ENCODE measurements at regions of chr12 and their contacts with region 1.

Region 1: DNA sequence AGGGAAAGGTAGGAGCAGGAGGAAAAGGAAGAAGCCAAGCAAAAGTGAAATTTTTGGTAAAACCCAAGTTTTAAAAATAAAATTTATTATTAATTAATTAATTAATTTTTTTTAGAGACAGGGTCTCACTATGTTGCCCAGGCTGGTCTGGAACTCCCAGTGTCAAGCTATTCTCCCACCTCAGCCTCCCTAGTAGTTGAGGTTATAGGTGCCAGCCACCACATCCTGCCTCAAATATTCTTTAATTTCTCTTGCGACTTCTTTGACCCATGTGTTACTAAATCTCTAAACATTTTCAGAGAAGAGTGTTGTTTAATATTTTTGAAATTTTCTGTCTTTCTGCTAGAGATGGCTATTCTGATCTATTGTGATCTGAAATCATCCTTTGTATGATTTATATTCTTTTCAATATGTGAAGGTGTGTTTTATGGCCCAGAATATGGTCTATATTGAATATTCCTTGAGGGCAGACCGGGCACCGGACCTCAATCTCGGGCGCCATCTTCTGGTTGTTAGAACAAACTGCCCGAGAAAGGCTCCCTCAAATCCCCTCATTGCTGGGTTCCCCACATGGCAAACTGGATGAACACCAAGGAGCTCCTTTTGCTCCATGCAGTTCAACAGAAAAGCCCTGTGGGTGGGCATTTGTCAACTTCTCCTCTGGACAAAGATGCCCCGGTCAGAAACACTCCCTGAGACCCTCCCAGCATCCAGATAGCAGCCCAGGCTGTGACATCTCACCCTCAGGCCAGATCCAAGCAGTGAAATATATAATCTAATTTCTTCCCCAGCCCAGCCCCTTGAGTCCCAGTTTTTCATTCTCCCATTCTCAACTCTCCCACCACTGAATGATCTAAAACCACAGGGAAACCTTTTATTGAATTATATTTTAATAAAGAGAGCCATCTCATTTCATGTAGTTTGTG is 110.5 kb downstream of the ASCL4 start:
- DNase-seq: peak; percentile 58
- H3K4me3 Mint-ChIP-seq: no peak overlapping the region
- H3K27ac Mint-ChIP-seq: no peak overlapping the region
- H3K4me1 Mint-ChIP-seq: no peaks in the 10 kb centered on the region
- H3K27me3 Mint-ChIP-seq: peaks cover 10% of the 10 kb centered on the region

Region 2: GRCh38 chr12:107105410-107105703 is 779.7 kb before region 1 on chr12:
- CTCF ChIA-PET with region 1: no interaction called
- POLR2A ChIA-PET with region 1: no interaction called
- intact Hi-C with region 1: no loop called
- DNase-seq: no peak
- H3K4me3 Mint-ChIP-seq: no peak overlapping the region
- H3K27ac Mint-ChIP-seq: no peak overlapping the region
- H3K4me1 Mint-ChIP-seq: peaks cover 8% of the 10 kb centered on the region
- H3K27me3 Mint-ChIP-seq: peaks cover 1% of the 10 kb centered on the region

Region 3: GRCh38 chr12:107670999-107671643 is 213.9 kb before region 1 on chr12:
- CTCF ChIA-PET with region 1: interaction called, 52 read pairs
- POLR2A ChIA-PET with region 1: no interaction called
- intact Hi-C with region 1: loop called (anchors 1 kb)
- DNase-seq: peak; percentile 66
- H3K4me3 Mint-ChIP-seq: no peak overlapping the region
- H3K27ac Mint-ChIP-seq: no peak overlapping the region
- H3K4me1 Mint-ChIP-seq: no peaks in the 10 kb centered on the region
- H3K27me3 Mint-ChIP-seq: peaks cover 2% of the 10 kb centered on the region

Region 4: DNA sequence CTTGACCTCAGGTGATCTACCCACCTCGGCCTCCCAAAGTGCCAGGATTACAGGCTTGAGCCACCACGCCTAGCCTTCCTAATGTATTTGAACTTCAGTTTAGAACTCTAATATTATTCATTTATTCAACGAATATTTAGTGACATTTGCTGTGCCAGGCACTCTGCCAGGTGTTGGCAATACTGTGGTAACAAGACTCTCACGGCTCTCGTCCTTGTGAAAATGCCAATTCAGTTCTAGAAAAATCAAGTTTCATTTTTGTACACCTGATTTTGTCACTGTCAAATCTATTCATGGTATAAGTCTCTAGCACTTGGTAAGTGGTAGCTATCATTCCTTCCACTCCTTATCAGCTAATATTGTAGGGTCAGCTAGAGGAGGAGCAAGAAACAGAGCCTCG is 205.7 kb before region 1 on chr12:
- CTCF ChIA-PET with region 1: interaction called, 52 read pairs
- POLR2A ChIA-PET with region 1: no interaction called
- intact Hi-C with region 1: loop called (anchors 1 kb)
- DNase-seq: no peak
- H3K4me3 Mint-ChIP-seq: no peak overlapping the region
- H3K27ac Mint-ChIP-seq: no peak overlapping the region
- H3K4me1 Mint-ChIP-seq: peaks cover 2% of the 10 kb centered on the region
- H3K27me3 Mint-ChIP-seq: peaks cover 4% of the 10 kb centered on the region

Region 5: DNA sequence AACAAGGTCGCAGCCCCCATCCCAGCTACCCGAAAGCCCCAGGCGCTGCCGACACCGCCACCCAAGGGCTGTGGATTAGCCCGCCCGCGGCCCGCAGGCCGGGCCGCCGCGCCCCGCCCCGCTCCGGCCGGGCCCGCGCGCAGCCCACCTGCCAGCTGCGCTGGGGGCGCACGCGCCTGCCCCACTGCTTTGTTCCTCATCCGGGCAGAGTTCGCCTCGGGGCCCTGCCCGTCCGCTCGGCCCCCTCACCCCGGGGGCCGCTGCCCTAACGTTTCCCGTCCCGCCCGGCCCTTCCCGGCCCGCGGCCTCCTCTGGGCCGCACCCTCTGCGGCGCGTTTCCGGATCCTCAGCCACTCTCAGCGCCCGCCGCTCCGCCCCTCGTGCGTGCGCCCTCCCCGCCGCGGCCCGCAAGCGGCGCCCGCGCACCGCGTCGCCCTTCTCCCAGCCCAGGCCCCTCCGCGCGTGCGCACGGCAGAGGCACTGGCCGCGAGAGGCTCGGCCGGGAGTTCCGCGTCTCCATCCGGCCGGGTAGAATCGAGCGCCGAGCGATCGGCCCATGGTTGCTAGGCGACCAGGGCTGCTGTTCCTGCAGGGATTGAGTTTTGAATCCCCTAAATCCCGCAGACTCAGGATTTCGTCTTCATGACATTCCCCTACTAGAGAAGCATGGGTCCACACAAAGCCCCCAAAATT is 124.1 kb before region 1 on chr12 and contains the start of gene PRDM4:
- CTCF ChIA-PET with region 1: interaction called, 4 read pairs
- POLR2A ChIA-PET with region 1: no interaction called
- intact Hi-C with region 1: loop called (anchors 1 kb)
- DNase-seq: peak; percentile 94
- H3K4me3 Mint-ChIP-seq: peak within 1 kb of the TSS; percentile 92
- H3K27ac Mint-ChIP-seq: peak within 1 kb of the TSS; percentile 88
- H3K4me1 Mint-ChIP-seq: peaks cover 27% of the 10 kb centered on the region
- H3K27me3 Mint-ChIP-seq: no peaks in the 10 kb centered on the region
- total RNA-seq, gene PRDM4: 33.4 to 39.0 TPM

Region 6: GRCh38 chr12:107906707-107907106 is 21.7 kb after region 1 on chr12:
- CTCF ChIA-PET with region 1: no interaction called
- POLR2A ChIA-PET with region 1: no interaction called
- intact Hi-C with region 1: no loop called
- DNase-seq: no peak
- H3K4me3 Mint-ChIP-seq: no peak overlapping the region
- H3K27ac Mint-ChIP-seq: no peak overlapping the region
- H3K4me1 Mint-ChIP-seq: peaks cover 8% of the 10 kb centered on the region
- H3K27me3 Mint-ChIP-seq: peaks cover 44% of the 10 kb centered on the region